ENCODE measurements at regions of chr9 and their contacts with region 1.

Region 1: GRCh38 chr9:98922721-98923435 is 20.8 kb upstream of the COL15A1 start:
- DNase-seq: no peak
- H3K4me3 ChIP-seq: no peak overlapping the region
- H3K27ac ChIP-seq: peak overlapping the region in 1 of 2 donors; percentile 26
- H3K4me1 ChIP-seq: peaks cover 11% of the 10 kb centered on the region
- H3K27me3 ChIP-seq: no peaks in the 10 kb centered on the region
- CTCF ChIP-seq: no peak
- EP300 ChIP-seq: no peak
- POLR2A ChIP-seq: no peak

Region 2: GRCh38 chr9:98974994-98975712 is 52.3 kb after region 1 on chr9:
- intact Hi-C with region 1: loop called in 1 of 4 experiments (anchors 10 kb)
- DNase-seq: peak; percentile 80 to 93 (median 89)
- H3K4me3 ChIP-seq: peak overlapping the region; percentile 19
- H3K27ac ChIP-seq: no peak overlapping the region
- H3K4me1 ChIP-seq: peaks cover 6% of the 10 kb centered on the region
- H3K27me3 ChIP-seq: no peaks in the 10 kb centered on the region
- CTCF ChIP-seq: peak; percentile 95 to 97 (median 96)
- EP300 ChIP-seq: no peak
- POLR2A ChIP-seq: no peak